Ovary (tissue), 10 donors: ENCODE measurements at regions of chr20 and their contacts with region 1.

Region 1: DNA sequence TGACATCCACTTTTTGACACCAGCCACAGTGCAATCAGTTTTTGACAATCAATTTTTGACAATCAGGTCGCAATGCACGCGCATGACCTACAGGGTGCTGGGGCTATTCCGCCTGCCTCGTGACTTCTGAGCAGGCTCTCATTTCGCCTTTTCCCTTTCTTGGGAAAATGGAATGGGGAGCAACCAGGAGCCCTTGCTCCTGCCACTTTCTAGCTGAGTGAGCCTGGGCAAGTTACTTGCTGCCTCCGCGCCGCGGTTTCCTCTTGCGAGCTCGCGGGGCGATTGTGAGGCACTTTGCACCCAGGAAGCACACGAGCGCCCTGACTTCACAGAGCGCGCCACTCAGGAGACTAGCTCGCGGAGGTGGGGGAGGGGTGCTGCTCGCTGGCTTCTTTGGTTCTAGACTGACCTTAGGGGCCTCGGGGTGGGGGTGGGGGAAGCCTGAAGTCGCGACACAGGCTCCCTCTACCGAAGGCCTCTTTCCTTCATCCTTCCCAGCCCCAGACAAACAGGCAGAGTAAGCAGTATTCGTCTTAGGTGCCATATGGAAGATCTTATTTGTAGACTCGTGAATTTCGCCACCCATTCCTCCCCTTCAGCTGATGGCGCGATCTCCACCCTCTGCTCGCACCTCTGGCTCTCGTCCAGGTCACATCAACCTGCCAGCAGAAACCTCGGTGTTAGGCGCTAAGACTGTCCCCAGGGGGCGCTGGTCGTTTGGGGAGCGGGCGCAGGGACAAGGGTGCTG is 4.6 kb downstream of the TP53TG5 start:
- DNase-seq: peak; percentile 80 to 88 (median 87)
- H3K4me3 ChIP-seq: peak overlapping the region; percentile 45
- H3K27ac ChIP-seq: peak overlapping the region in 1 of 2 donors; percentile 44
- H3K4me1 ChIP-seq: peaks cover 5% of the 10 kb centered on the region
- H3K27me3 ChIP-seq: no peaks in the 10 kb centered on the region
- CTCF ChIP-seq: peak; percentile 57 to 79 (median 58)
- EP300 ChIP-seq: no peak
- POLR2A ChIP-seq: no peak

Region 2: DNA sequence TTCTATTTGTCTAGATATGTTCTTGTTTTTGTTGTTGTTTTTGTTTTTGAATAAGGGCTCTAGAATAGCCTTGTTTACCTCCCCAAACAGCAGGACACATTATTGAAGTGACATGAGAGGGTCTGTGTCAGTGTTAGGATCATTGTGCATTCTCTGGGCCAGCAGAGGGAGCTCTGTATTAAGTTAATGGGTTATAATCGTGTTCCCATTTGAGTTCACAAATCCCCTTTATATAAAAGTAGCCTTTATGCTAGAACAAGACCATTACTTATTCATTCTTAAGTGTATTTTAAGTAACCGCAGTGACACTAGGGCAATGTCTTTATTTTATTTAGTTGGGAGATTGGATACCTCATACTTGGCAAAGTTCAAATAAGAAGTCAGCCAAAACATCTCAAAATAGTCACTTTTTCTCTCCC is 362.4 kb before region 1 on chr20:
- intact Hi-C with region 1: no loop called
- DNase-seq: peak; percentile 27 to 63 (median 43)
- H3K4me3 ChIP-seq: no peak overlapping the region
- H3K27ac ChIP-seq: no peak overlapping the region
- H3K4me1 ChIP-seq: peaks cover under 1% of the 10 kb centered on the region
- H3K27me3 ChIP-seq: no peaks in the 10 kb centered on the region
- CTCF ChIP-seq: peak in 2 of 3 donors; percentile 42 to 56
- EP300 ChIP-seq: no peak
- POLR2A ChIP-seq: no peak

Region 3: GRCh38 chr20:45415774-45416637 is 42.5 kb after region 1 on chr20 and contains the start of gene PIGT:
- intact Hi-C with region 1: loop called in 2 of 4 experiments (anchors 5 to 10 kb)
- DNase-seq: peak; percentile 75 to 86 (median 78)
- H3K4me3 ChIP-seq: peak within 1 kb of the TSS; percentile 95
- H3K27ac ChIP-seq: peak within 1 kb of the TSS; percentile 41 to 46
- H3K4me1 ChIP-seq: peaks cover 5% of the 10 kb centered on the region
- H3K27me3 ChIP-seq: no peaks in the 10 kb centered on the region
- CTCF ChIP-seq: no peak
- EP300 ChIP-seq: no peak
- POLR2A ChIP-seq: peak; percentile 69
- total RNA-seq, gene PIGT: 30.0 to 84.2 (median 69.3) TPM

Region 4: GRCh38 chr20:45436732-45437391 is 63.3 kb after region 1 on chr20:
- intact Hi-C with region 1: loop called in 2 of 4 experiments (anchors 5 kb)
- DNase-seq: peak; percentile 84 to 92 (median 89)
- H3K4me3 ChIP-seq: peak overlapping the region; percentile 44
- H3K27ac ChIP-seq: peak overlapping the region; percentile 65 to 70
- H3K4me1 ChIP-seq: peaks cover 2% of the 10 kb centered on the region
- H3K27me3 ChIP-seq: no peaks in the 10 kb centered on the region
- CTCF ChIP-seq: peak; percentile 90 to 94 (median 91)
- EP300 ChIP-seq: no peak
- POLR2A ChIP-seq: peak; percentile 29